ENCODE measurements at regions of chr6 and their contacts with region 1.

Region 1: GRCh38 chr6:155174576-155175211 is 89.1 kb upstream of the CLDN20 start:
- DNase-seq: peak in 8 of 9 donors; percentile 38 to 63 (median 54)
- ATAC-seq: peak; percentile 79
- H3K4me3 ChIP-seq: no peak overlapping the region
- H3K4me3 Mint-ChIP-seq: peak overlapping the region in 1 of 10 donors; percentile 19
- H3K27ac ChIP-seq: no peak overlapping the region
- H3K27ac Mint-ChIP-seq: peak overlapping the region in 2 of 9 donors; percentile 0 to 69
- H3K4me1 ChIP-seq: peaks cover 8 to 18% of the 10 kb centered on the region in 2 donors
- H3K4me1 Mint-ChIP-seq: peaks cover 8 to 44% (median 22%) of the 10 kb centered on the region in 7 donors
- H3K27me3 ChIP-seq: no peaks in the 10 kb centered on the region
- H3K27me3 Mint-ChIP-seq: no peaks in the 10 kb centered on the region

Region 2: DNA sequence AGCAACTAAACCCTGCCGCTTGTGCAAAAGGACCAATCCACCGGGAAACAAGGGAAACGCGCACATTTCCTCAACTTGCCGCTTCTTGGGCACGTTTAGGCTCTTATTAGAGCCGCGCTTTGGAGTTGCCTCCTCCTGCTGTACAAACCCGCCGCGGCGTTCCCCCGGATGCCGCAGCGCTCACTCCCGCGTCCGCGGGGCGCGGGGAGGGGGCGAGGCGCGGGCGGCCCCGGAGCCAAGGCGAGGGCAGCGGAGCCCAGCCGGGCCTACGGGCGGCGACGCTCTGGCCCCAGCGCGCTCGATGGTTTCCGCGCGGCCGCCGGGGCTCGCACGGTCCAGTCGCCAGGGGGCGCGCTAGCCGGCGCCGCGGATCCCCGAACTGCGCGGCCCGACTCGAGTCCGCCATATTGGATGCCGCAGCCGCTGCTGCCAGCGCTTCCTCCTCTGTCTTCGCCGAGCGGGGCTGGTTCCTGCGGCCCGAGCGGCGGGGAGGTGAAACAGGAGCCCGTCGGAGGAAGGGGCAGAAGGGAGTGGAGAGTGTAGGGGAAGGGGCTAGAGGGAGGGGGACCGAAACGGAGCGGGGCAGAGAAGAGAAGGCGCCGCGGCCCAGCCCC is 441.6 kb before region 1 on chr6 and contains the start of gene SCAF8:
- CTCF ChIA-PET with region 1: no interaction called
- POLR2A ChIA-PET with region 1: no interaction called
- intact Hi-C with region 1: loop called in 1 of 2 experiments (anchors 1 kb)
- DNase-seq: peak; percentile 72 to 96 (median 90)
- ATAC-seq: peak; percentile 88
- H3K4me3 ChIP-seq: peak within 1 kb of the TSS; percentile 81
- H3K4me3 Mint-ChIP-seq: peak within 1 kb of the TSS; percentile 89 to 98 (median 92)
- H3K27ac ChIP-seq: peak within 1 kb of the TSS; percentile 93
- H3K27ac Mint-ChIP-seq: peak within 1 kb of the TSS; percentile 85 to 99 (median 93)
- H3K4me1 ChIP-seq: peaks cover 26 to 36% of the 10 kb centered on the region in 2 donors
- H3K4me1 Mint-ChIP-seq: peaks cover 20 to 49% (median 44%) of the 10 kb centered on the region in 7 donors
- H3K27me3 ChIP-seq: no peaks in the 10 kb centered on the region
- H3K27me3 Mint-ChIP-seq: no peaks in the 10 kb centered on the region
- total RNA-seq, gene SCAF8: 41.1 to 69.2 (median 54.9) TPM

Region 3: DNA sequence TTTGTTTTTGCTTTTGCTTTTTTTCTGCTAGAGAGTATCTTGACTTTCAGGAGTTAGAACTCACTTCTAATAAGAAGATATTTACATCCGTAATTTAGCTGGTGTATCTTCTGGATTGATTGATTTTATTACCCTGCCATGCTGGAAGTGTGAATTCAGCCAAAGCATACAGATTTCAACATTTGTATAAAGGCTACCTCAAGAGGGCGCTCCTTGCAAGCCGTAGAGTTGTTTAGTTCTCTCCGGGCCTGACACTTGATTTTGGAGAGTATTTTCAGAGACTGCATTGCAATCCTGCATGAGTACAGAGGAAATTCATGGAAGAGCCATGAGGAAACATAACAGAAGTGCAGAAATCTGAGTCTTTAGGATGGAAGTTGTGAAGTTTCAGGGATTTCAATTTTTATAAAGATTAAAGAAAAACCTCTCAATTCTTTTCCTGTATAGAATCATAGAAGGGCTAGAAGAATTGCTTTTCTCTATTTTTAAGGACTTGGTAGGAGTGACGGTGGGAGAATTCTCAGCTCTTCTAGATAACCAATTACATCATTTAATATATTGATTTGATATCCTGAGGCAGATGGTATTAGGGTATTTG is 246.3 kb before region 1 on chr6:
- CTCF ChIA-PET with region 1: interaction called, 7 read pairs
- POLR2A ChIA-PET with region 1: no interaction called
- intact Hi-C with region 1: loop called (anchors 1 kb)
- DNase-seq: peak in 8 of 9 donors; percentile 7 to 55 (median 43)
- ATAC-seq: peak; percentile 57
- H3K4me3 ChIP-seq: no peak overlapping the region
- H3K4me3 Mint-ChIP-seq: no peak overlapping the region
- H3K27ac ChIP-seq: no peak overlapping the region
- H3K27ac Mint-ChIP-seq: no peak overlapping the region
- H3K4me1 ChIP-seq: no peaks in the 10 kb centered on the region
- H3K4me1 Mint-ChIP-seq: peaks cover 0 to 17% (median 8%) of the 10 kb centered on the region in 7 donors
- H3K27me3 ChIP-seq: no peaks in the 10 kb centered on the region
- H3K27me3 Mint-ChIP-seq: no peaks in the 10 kb centered on the region

Region 4: DNA sequence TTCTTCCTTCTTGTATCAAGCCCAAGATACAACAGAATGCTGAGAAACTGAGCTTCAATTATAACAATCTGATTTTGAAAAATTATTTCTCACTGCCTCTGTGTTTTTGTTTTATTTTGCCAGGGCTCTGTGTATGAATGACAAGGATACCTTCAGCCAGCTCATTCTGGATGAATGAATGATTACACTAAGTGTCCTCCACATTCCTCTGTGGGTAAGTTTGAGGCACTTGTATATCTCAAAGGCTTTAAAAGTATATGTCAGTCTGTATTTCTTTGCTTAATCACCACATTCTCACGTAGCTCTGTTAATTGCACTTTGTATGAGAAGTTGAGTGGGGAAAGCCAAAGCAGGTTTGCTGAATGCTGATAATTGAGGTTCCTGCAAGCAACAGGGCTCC is 84.5 kb before region 1 on chr6:
- CTCF ChIA-PET with region 1: no interaction called
- POLR2A ChIA-PET with region 1: no interaction called
- intact Hi-C with region 1: loop called in 1 of 2 experiments (anchors 1 kb)
- DNase-seq: no peak
- ATAC-seq: no peak
- H3K4me3 ChIP-seq: no peak overlapping the region
- H3K4me3 Mint-ChIP-seq: no peak overlapping the region
- H3K27ac ChIP-seq: no peak overlapping the region
- H3K27ac Mint-ChIP-seq: no peak overlapping the region
- H3K4me1 ChIP-seq: peaks cover 0 to 9% of the 10 kb centered on the region in 2 donors
- H3K4me1 Mint-ChIP-seq: no peaks in the 10 kb centered on the region
- H3K27me3 ChIP-seq: no peaks in the 10 kb centered on the region
- H3K27me3 Mint-ChIP-seq: peaks cover 0 to 5% (median 0%) of the 10 kb centered on the region in 5 donors

Region 5: DNA sequence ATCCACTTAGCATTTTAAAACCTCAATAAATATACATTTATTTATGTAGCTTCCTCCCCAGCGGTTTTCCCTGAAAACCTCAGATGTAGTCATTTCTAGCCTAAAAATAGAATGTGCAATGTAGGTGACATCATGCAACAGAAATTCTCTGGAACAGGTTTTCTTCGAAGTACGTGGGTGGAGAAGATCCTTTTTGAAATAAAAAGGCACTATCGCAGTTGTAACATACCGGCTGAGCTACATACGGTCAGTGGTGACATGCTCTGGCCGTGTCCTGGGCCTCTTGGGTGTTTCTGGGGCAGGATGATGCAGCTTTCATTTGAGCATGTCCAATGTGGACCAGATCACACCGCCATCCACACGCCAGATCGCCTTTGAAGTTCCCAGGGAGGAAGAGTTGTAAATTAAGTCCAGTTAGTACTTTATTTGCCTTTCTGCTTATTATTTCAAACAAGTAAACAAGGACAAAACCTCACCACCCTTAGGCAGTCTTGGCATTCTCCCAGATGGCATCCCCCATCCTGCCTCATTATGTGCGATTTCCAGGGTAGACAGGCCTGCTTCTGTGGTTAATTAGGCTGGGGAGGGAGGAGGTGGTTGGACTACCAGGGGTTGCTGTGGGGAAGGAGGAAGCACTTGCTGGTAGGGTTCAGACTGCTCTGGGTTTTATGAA is 20.4 kb before region 1 on chr6:
- CTCF ChIA-PET with region 1: no interaction called
- POLR2A ChIA-PET with region 1: no interaction called
- intact Hi-C with region 1: loop called in 1 of 2 experiments (anchors 1 kb)
- DNase-seq: peak in 1 of 9 donors; percentile 56
- ATAC-seq: no peak
- H3K4me3 ChIP-seq: no peak overlapping the region
- H3K4me3 Mint-ChIP-seq: peak overlapping the region in 1 of 10 donors; percentile 63
- H3K27ac ChIP-seq: no peak overlapping the region
- H3K27ac Mint-ChIP-seq: peak overlapping the region in 1 of 9 donors; percentile 95
- H3K4me1 ChIP-seq: peaks cover 5 to 12% of the 10 kb centered on the region in 2 donors
- H3K4me1 Mint-ChIP-seq: peaks cover 0 to 72% (median 14%) of the 10 kb centered on the region in 7 donors
- H3K27me3 ChIP-seq: no peaks in the 10 kb centered on the region
- H3K27me3 Mint-ChIP-seq: peaks cover 0 to 8% (median 4%) of the 10 kb centered on the region in 5 donors

Region 6: GRCh38 chr6:155212616-155213365 is 38.1 kb after region 1 on chr6:
- CTCF ChIA-PET with region 1: no interaction called
- POLR2A ChIA-PET with region 1: no interaction called
- intact Hi-C with region 1: no loop called
- DNase-seq: no peak
- ATAC-seq: no peak
- H3K4me3 ChIP-seq: no peak overlapping the region
- H3K4me3 Mint-ChIP-seq: no peak overlapping the region
- H3K27ac ChIP-seq: no peak overlapping the region
- H3K27ac Mint-ChIP-seq: no peak overlapping the region
- H3K4me1 ChIP-seq: no peaks in the 10 kb centered on the region
- H3K4me1 Mint-ChIP-seq: no peaks in the 10 kb centered on the region
- H3K27me3 ChIP-seq: no peaks in the 10 kb centered on the region
- H3K27me3 Mint-ChIP-seq: peaks cover 4 to 10% (median 6%) of the 10 kb centered on the region in 5 donors

Region 7: GRCh38 chr6:155273431-155273830 is 98.7 kb after region 1 on chr6:
- CTCF ChIA-PET with region 1: no interaction called
- POLR2A ChIA-PET with region 1: no interaction called
- intact Hi-C with region 1: loop called (anchors 1 to 5 kb)
- DNase-seq: no peak
- ATAC-seq: no peak
- H3K4me3 ChIP-seq: no peak overlapping the region
- H3K4me3 Mint-ChIP-seq: no peak overlapping the region
- H3K27ac ChIP-seq: no peak overlapping the region
- H3K27ac Mint-ChIP-seq: peak overlapping the region in 3 of 9 donors; percentile 46 to 62 (median 54)
- H3K4me1 ChIP-seq: peaks cover 0 to under 1% of the 10 kb centered on the region in 2 donors
- H3K4me1 Mint-ChIP-seq: peaks cover 7 to 50% (median 18%) of the 10 kb centered on the region in 7 donors
- H3K27me3 ChIP-seq: no peaks in the 10 kb centered on the region
- H3K27me3 Mint-ChIP-seq: no peaks in the 10 kb centered on the region

Region 8: DNA sequence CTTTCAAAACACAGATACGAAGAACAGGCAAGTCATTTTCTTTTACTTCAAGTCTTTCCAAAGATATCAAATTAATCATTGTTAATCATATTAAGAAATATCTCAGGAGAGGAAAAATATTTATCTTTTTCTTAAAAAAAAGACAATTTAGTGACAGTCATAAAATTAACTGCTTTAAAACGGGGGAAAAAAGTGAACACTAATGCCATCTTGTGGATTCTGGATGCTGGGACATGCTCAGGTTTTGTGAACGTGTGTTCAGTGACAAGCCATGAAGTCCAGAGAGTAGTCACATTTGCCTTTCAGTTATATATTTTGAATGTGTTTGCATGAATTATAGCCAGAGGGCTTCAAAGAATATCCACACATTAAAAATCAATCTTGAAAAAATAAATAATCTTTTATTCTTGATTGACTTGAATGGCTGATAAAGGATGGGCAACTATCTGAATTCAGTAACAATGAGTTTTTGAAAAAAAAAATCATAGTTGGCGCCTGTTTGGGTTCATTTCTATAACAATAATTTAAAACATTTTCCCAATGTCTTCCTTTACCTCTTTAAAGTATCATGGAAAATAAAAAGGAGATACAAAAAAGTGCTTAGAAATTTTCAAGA is 355.6 kb after region 1 on chr6:
- CTCF ChIA-PET with region 1: no interaction called
- POLR2A ChIA-PET with region 1: no interaction called
- intact Hi-C with region 1: loop called (anchors 2 kb)
- DNase-seq: peak in 5 of 9 donors; percentile 22 to 40 (median 30)
- ATAC-seq: no peak
- H3K4me3 ChIP-seq: no peak overlapping the region
- H3K4me3 Mint-ChIP-seq: no peak overlapping the region
- H3K27ac ChIP-seq: no peak overlapping the region
- H3K27ac Mint-ChIP-seq: no peak overlapping the region
- H3K4me1 ChIP-seq: no peaks in the 10 kb centered on the region
- H3K4me1 Mint-ChIP-seq: peaks cover 0 to 10% (median 7%) of the 10 kb centered on the region in 7 donors
- H3K27me3 ChIP-seq: no peaks in the 10 kb centered on the region
- H3K27me3 Mint-ChIP-seq: peaks cover 0 to 11% (median 0%) of the 10 kb centered on the region in 5 donors

Measured in naive thymus-derived CD4-positive, alpha-beta T cell (primary cell).